ENCODE measurements at regions of chr2 and their contacts with region 1.

Region 1: GRCh38 chr2:118032169-118033013 is 18.5 kb upstream of the CCDC93 start:
- ATAC-seq: peak in 4 of 8 experiments; percentile 50 to 84 (median 82)
- H3K4me3 ChIP-seq: no peak overlapping the region
- H3K27ac ChIP-seq: no peak overlapping the region
- H3K4me1 ChIP-seq: no peaks in the 10 kb centered on the region

Region 2: GRCh38 chr2:118169359-118170007 is 137.1 kb after region 1 on chr2:
- in situ Hi-C with region 1: loop called in 1 of 9 experiments (anchors 25 kb)
- ATAC-seq: peak in 4 of 8 experiments; percentile 49 to 83 (median 60)
- H3K4me3 ChIP-seq: no peak overlapping the region
- H3K27ac ChIP-seq: no peak overlapping the region
- H3K4me1 ChIP-seq: no peaks in the 10 kb centered on the region

Region 3: GRCh38 chr2:118221666-118222594 is 189.5 kb after region 1 on chr2:
- in situ Hi-C with region 1: loop called in 1 of 9 experiments (anchors 25 kb)
- ATAC-seq: peak; percentile 77 to 90 (median 84)
- H3K4me3 ChIP-seq: no peak overlapping the region
- H3K27ac ChIP-seq: peak overlapping the region in 1 of 2 donors; percentile 5
- H3K4me1 ChIP-seq: peaks cover 25 to 34% of the 10 kb centered on the region in 2 donors